PC-9 (cell line): ENCODE measurements at regions of chr6 and their contacts with region 1.

Region 1: DNA sequence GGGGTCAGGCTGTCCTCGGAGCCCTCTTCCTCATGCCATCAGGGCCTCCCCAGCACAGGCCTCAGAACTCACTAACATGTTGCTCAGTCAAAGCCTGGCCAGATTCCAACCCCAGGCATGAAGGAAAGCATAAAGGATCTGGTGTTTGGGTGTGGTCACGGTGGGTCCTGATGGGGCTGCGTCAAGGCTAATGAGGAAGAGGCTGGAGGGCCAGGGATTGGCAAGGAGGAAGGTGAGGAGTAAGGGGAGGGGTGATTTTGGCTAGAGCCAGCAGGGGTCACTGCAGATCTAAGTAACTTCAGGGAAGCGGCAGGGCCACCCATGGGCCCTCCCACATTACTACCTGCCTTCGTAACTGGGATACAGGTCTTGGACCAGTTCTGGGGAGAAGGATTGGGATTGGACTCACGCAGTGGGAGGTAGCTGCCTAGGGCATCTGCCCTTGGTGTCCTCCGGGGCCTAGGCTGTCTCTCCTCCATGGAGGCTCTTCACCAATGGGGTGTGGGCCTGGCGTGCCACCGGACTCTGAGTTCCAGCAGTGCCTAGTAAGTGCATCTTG is 36.2 kb upstream of the MRPS18A start:
- DNase-seq: peak; percentile 69 to 74
- H3K4me3 ChIP-seq: no peak overlapping the region
- H3K27ac ChIP-seq: no peak overlapping the region
- H3K4me1 ChIP-seq: peaks cover 28% of the 10 kb centered on the region
- H3K27me3 ChIP-seq: no peaks in the 10 kb centered on the region
- CTCF ChIP-seq: peak; percentile 83

Region 2: DNA sequence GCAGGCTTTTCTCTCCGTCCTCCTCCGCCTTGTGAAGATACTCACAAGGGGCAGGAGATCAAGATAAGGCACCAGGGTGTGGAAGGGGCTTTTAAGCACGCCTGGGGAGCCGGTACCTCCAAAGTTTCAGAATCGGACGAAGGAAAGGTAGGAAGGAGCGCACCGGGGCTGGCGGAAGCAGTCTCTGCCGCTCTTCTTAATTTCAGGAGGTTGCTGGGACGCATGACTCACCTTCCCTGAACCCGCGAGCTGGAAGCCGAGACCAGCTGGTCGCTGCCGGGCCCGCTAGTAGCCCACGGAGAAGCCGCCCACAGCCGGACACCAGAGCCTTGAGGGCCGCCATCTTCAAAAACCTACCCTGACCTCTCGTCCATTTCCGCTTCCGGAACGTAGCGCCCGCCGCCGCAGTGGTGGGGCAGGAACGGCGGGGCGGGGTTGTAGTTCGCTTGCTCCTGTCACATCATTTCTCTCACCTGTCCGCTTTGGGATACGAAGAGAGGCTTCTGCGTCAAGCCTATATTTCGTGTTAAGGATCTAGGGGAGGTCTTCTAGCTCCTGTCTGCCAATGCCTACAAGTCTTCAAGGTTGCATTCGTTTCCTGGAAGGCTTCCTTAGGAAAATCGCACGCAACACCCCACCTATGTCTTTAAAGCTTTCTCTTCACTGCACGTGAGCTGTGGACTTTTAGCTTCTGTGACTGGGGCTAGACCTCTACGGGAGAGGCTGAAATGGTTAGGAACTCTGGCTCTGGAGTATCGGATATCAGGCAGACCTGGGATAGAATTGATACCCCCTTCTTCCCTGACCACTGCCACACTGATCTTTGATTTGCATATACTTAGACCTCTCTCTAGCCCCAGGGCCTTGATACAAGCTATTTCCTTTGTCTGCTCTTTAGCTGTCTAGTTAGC is 36.1 kb before region 1 on chr6 and contains the start of gene MRPS18A:
- CTCF ChIA-PET with region 1: no interaction called
- POLR2A ChIA-PET with region 1: interaction called, 5 read pairs
- intact Hi-C with region 1: loop called (anchors 5 kb)
- DNase-seq: peak; percentile 83 to 85
- H3K4me3 ChIP-seq: peak within 1 kb of the TSS; percentile 87
- H3K27ac ChIP-seq: peak within 1 kb of the TSS; percentile 69
- H3K4me1 ChIP-seq: peaks cover 20% of the 10 kb centered on the region
- H3K27me3 ChIP-seq: no peaks in the 10 kb centered on the region
- CTCF ChIP-seq: no peak
- total RNA-seq, gene MRPS18A: 49.1 and 54.8 TPM in 2 replicates

Region 3: GRCh38 chr6:43951063-43951755 is 227.4 kb after region 1 on chr6:
- CTCF ChIA-PET with region 1: no interaction called
- POLR2A ChIA-PET with region 1: no interaction called
- intact Hi-C with region 1: loop called (anchors 5 kb)
- DNase-seq: peak; percentile 44 to 62
- H3K4me3 ChIP-seq: no peak overlapping the region
- H3K27ac ChIP-seq: no peak overlapping the region
- H3K4me1 ChIP-seq: peaks cover 21% of the 10 kb centered on the region
- H3K27me3 ChIP-seq: no peaks in the 10 kb centered on the region
- CTCF ChIP-seq: peak; percentile 63